Mammary epithelial cell (primary cell): ENCODE measurements at regions of chr17 and their contacts with region 1.

Region 1: DNA sequence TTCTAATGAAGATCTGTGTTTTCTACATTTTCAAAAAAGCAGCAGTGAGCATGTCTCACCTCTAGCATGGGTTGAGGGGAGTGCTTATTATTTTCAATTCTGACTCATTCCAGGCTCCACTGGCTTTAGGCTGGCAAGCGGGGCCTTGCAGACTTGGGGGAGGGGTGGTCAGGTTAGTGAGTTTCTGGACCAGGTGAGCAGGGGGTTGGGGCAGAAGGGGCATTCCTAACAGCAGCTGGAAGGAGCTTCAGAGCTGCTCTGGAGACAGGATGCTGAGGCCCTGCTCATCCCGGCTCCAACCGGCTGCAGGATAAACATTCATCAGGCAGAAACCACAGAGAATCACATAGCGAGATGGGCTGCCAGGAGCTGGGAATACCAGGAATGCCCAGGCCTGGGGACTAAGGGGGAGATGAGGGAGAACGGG is 10.5 kb upstream of the KRT19 start:
- DNase-seq: peak; percentile 83
- H3K4me3 ChIP-seq: no peak overlapping the region
- H3K27ac ChIP-seq: peak overlapping the region; percentile 87
- H3K4me1 ChIP-seq: peaks cover 66% of the 10 kb centered on the region
- H3K27me3 ChIP-seq: no peaks in the 10 kb centered on the region
- CTCF ChIP-seq: no peak

Region 2: GRCh38 chr17:41507315-41507928 is 31.2 kb before region 1 on chr17:
- CTCF ChIA-PET with region 1: no interaction called
- dilution Hi-C with region 1: no loop called
- in situ Hi-C with region 1: no loop called
- intact Hi-C with region 1: no loop called
- DNase-seq: no peak
- H3K4me3 ChIP-seq: no peak overlapping the region
- H3K27ac ChIP-seq: no peak overlapping the region
- H3K4me1 ChIP-seq: no peaks in the 10 kb centered on the region
- H3K27me3 ChIP-seq: no peaks in the 10 kb centered on the region
- CTCF ChIP-seq: no peak

Region 3: DNA sequence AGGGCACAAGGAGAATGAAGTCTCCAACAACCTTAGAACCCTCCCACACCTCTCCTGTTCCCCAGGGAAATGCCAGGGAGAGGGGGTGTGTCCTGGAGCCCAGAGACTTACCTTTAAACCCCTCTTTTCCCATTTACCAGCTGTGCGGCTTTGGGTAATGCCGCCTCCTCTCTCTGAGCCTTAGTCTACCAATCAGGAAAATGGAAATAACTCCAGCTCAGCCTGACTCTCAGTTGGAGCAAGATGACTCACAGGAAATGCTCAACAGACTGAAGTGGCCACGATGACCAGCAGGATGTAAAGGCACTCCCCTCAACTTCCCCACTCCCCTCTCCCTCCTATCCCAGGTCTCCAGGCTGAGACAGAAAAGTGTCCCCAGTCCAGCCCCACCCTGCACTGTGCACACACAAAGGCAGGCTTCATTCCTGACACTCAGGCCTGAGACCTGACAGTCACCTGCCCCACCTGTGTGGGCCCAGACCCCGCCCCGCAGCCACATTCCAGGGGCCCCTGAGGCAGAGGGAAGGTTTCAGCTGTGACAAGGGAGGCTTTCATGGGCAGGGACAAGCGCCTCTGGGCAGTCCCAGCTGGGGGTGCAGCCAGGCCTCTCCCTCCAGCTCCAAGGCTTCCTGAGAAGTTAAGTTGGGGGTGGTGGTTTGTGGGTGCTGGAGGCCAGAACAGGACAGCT is 16.9 kb before region 1 on chr17:
- CTCF ChIA-PET with region 1: no interaction called
- dilution Hi-C with region 1: no loop called
- in situ Hi-C with region 1: no loop called
- intact Hi-C with region 1: loop called (anchors 1 kb)
- DNase-seq: peak; percentile 99
- H3K4me3 ChIP-seq: peak overlapping the region in 1 of 3 experiments; percentile 19
- H3K27ac ChIP-seq: peak overlapping the region; percentile 94
- H3K4me1 ChIP-seq: peaks cover 62% of the 10 kb centered on the region
- H3K27me3 ChIP-seq: no peaks in the 10 kb centered on the region
- CTCF ChIP-seq: no peak